ENCODE measurements at regions of chr2 and their contacts with region 1.

Region 1: DNA sequence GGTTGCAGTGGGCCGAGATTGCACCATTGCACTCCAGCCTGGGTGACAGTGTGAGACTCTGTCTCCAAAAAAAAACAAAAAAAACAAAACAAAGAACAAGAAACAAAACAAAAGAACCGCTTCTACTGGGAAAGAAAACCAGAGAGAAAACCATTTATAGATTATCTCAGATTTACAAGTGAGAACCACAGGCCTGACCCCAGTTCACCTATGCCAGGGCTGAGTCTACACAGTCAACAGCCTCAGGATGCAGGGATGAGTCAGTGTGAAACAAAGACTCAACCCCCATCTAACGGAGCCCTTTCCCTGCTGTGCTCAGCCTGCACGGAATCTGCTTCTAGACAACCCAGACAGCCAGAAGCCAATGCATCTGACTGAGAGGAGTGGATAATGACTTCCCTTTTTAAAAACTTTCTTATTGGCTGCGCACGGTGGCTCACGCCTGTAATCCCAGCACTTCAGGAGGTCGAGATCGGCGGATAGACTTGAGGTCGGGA is 25.5 kb upstream of the YWHAQ start:
- DNase-seq: peak; percentile 88
- H3K4me3 Mint-ChIP-seq: peak overlapping the region; percentile 25
- H3K27ac Mint-ChIP-seq: peak overlapping the region; percentile 93
- H3K4me1 Mint-ChIP-seq: peaks cover 46% of the 10 kb centered on the region
- H3K27me3 Mint-ChIP-seq: peaks cover 16% of the 10 kb centered on the region

Region 2: DNA sequence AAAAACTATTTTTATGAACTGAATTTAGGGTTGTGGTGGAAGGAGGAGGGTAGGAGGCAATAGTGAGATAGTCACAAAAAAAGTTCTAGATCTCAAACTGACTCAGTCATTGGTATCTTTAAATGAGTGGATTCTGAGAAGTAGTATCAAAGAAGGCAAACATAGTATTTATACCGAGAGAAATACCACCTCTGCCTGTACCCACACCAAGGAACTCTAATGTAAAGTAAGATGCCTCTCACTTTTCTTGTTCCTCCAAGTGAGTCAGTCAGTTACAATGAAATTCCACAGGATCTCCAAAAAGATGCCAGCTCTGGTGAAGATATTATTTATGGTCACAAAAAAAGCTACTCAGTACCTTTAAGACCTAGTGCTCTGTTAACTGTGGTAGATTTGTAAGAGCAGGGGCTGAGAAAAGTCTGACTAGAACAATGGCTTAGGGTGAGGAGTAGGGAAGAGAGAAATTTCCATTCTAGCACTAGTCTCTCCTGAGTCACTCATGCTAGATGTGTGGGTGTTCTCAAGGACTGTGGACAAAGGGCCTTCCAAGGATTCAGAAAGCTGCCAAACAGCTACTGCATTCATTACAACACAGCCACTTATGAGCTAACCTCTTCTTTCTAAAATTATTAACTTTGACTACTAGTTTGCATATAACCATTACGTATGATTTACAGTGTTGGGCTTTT is 61.8 kb before region 1 on chr2:
- intact Hi-C with region 1: loop called (anchors 1 kb)
- DNase-seq: no peak
- H3K4me3 Mint-ChIP-seq: peak overlapping the region; percentile 22
- H3K27ac Mint-ChIP-seq: peak overlapping the region; percentile 81
- H3K4me1 Mint-ChIP-seq: peaks cover 52% of the 10 kb centered on the region
- H3K27me3 Mint-ChIP-seq: no peaks in the 10 kb centered on the region

Region 3: GRCh38 chr2:9641641-9642040 is 14.7 kb before region 1 on chr2:
- intact Hi-C with region 1: loop called (anchors 1 kb)
- DNase-seq: peak; percentile 77
- H3K4me3 Mint-ChIP-seq: peak overlapping the region; percentile 57
- H3K27ac Mint-ChIP-seq: peak overlapping the region; percentile 52
- H3K4me1 Mint-ChIP-seq: peaks cover 26% of the 10 kb centered on the region
- H3K27me3 Mint-ChIP-seq: peaks cover 18% of the 10 kb centered on the region

Region 4: DNA sequence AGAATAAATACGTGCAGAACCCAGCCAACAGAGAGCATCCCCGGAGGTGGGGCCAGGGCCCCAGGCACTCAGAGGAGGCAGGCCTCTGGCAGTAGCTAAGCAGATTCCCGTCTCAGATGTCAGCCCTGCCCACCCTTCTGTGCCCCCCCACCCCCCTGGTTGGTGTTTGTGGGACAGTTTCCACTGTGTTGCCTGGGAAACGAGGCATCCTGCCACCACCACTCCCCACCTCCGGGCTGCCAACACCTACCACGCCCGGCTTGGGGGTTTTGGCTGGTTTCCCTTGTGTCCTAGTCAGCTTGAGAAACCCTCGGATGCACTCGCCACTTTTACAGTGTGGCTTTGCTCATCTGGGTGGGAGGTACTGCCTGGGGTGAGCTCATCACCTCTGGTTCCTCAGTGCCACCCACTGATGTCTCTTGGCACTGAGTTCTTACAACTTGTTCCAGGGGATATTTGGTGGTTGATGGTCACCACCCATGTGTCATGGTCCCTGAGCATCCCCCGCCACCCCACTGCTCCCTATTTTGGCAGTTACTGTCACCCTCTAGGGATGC is 46.8 kb after region 1 on chr2:
- intact Hi-C with region 1: loop called (anchors 1 kb)
- DNase-seq: peak; percentile 93
- H3K4me3 Mint-ChIP-seq: peak overlapping the region; percentile 32
- H3K27ac Mint-ChIP-seq: peak overlapping the region; percentile 64
- H3K4me1 Mint-ChIP-seq: peaks cover 41% of the 10 kb centered on the region
- H3K27me3 Mint-ChIP-seq: peaks cover 2% of the 10 kb centered on the region

Region 5: GRCh38 chr2:9753276-9753600 is 96.9 kb after region 1 on chr2:
- intact Hi-C with region 1: loop called (anchors 1 kb)
- DNase-seq: peak; percentile 83
- H3K4me3 Mint-ChIP-seq: peak overlapping the region; percentile 56
- H3K27ac Mint-ChIP-seq: peak overlapping the region; percentile 88
- H3K4me1 Mint-ChIP-seq: peaks cover 59% of the 10 kb centered on the region
- H3K27me3 Mint-ChIP-seq: peaks cover 32% of the 10 kb centered on the region

Measured in activated CD4-positive, alpha-beta T cell treated with anti-CD3 and anti-CD28 coated beads, Interleukin-2, amount 10 ng/mL, durations not matched to agents 24 days and 14 days (primary cell).